CD4-positive, alpha-beta memory T cell (primary cell): ENCODE measurements at regions of chr12 and their contacts with region 1.

Region 1: DNA sequence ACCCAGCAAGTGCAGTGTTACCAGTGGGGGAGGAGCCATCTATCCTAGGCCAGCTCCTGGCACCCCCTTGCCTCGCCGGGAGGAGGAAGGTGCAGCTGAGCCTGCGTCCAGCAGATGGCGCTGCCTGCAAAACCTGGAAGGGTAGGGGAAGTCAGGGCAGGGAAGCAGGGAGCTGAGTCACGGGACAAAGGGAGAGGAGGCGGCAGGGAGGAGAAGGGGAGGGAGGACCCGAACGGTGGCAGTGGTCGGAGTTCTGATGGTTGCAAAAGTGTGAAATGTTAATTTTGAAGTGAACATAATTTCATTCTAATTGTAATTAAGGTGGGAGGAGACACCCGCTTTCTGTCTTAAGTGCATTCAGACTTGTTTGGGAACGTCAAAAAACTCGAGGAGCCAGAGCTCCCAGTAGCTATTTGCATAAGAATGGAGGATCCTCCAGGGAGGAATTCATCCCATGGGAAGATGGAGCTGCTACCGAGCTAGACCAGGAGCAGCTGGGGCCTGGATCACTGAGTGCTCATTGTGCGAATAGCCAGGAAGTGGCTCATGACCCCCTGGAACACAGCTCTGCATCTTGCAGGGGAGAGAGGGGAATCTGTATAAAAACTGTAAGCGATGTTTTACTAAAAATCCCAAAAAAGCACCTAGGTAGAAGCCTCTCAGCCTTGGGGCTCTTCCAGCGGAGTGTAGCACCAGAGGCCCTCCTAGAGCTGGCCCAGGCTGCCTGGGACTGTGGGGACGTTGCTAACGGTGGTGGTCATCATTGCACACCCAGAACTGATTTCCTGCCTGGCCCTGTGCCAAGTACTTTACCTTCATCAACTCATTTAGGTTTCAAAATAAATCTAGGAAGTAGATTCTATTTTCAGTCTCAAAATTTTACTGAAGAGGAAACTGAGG is 59.5 kb downstream of the EMP1 start:
- DNase-seq: peak; percentile 57 to 71 (median 61)
- H3K4me3 ChIP-seq: no peak overlapping the region
- H3K4me3 Mint-ChIP-seq: peak overlapping the region in 2 of 8 donors; percentile 34 to 49
- H3K27ac ChIP-seq: no peak overlapping the region
- H3K27ac Mint-ChIP-seq: no peak overlapping the region
- H3K4me1 ChIP-seq: no peaks in the 10 kb centered on the region
- H3K4me1 Mint-ChIP-seq: peaks cover 0 to 3% (median 1%) of the 10 kb centered on the region in 4 donors
- H3K27me3 ChIP-seq: no peaks in the 10 kb centered on the region
- H3K27me3 Mint-ChIP-seq: peaks cover 6 to 12% of the 10 kb centered on the region in 2 donors

Region 2: DNA sequence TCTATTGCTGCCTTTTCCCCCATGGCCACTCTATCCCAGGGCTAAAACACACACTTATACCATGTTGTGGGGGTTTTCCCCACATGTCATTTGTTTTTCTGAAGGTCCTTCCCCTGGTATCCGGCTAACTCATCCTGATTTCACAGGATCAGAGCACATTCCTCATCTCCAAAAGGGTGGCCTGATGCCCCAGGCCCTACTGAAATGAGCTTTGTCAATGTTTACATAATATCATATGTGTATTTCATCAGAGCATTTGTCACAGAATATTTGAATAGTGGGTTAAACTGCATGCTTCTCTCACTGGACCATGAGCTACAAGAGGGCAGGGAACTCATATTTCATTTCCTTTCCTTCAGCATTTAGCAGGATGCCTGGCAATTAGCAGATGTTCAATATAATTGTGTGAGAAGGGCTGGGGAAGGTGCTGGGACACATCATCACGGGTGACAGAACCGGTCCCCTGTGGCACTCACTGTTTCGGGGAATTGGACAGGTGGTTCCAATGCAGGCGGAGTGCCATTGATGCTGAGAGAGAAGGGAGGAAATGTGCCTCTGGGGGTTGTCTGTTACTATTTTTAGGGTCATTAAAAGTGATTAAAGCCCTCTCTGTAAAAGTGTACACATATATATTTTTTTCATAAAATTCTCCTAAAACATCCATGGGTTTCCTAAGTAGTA is 32.7 kb before region 1 on chr12:
- CTCF ChIA-PET with region 1: interaction called, 11 read pairs
- POLR2A ChIA-PET with region 1: no interaction called
- intact Hi-C with region 1: no loop called
- DNase-seq: no peak
- H3K4me3 ChIP-seq: no peak overlapping the region
- H3K4me3 Mint-ChIP-seq: no peak overlapping the region
- H3K27ac ChIP-seq: no peak overlapping the region
- H3K27ac Mint-ChIP-seq: no peak overlapping the region
- H3K4me1 ChIP-seq: no peaks in the 10 kb centered on the region
- H3K4me1 Mint-ChIP-seq: no peaks in the 10 kb centered on the region
- H3K27me3 ChIP-seq: peaks cover 5% of the 10 kb centered on the region
- H3K27me3 Mint-ChIP-seq: peaks cover 15 to 16% of the 10 kb centered on the region in 2 donors

Region 3: DNA sequence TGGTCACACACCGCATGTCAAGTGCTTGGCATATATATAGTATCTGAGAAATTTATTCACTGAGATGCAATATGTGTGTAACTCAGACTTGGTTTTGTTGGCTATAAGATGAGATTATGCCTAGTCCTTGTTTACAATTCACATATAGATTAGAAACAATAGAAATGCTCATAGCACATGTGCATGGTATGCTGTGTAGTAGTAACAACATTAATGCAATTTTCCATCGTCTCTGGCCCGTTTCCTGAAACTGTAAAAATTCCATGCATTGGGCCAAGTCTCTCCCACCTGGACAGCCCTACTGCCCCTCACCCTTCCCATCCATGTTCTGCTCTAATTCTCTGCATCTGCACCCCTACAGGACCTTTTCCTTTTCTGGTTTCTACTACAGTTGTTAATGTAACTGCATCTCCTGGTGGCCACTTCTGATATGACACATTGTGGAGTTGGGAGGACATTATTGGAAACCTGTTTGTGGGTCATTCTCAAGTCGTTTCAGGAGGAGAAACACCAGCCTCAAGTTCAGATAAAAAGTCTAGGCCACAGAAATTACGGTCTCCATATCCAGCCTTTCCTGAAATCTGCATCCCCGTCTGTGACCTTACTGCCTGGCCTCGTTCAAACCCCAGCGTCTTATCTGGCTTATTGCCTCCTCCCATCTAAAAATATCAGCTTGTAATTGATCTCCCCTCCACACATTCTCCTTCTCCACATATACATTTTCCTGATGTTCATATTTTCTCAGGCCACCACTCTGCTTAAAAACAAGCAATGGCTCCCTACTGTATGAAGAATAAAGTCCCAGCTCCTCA is 22.0 kb before region 1 on chr12:
- CTCF ChIA-PET with region 1: interaction called, 12 read pairs
- POLR2A ChIA-PET with region 1: no interaction called
- intact Hi-C with region 1: no loop called
- DNase-seq: peak; percentile 21 to 40 (median 27)
- H3K4me3 ChIP-seq: no peak overlapping the region
- H3K4me3 Mint-ChIP-seq: no peak overlapping the region
- H3K27ac ChIP-seq: no peak overlapping the region
- H3K27ac Mint-ChIP-seq: peak overlapping the region in 1 of 7 donors; percentile 63
- H3K4me1 ChIP-seq: no peaks in the 10 kb centered on the region
- H3K4me1 Mint-ChIP-seq: no peaks in the 10 kb centered on the region
- H3K27me3 ChIP-seq: no peaks in the 10 kb centered on the region
- H3K27me3 Mint-ChIP-seq: peaks cover 14 to 16% of the 10 kb centered on the region in 2 donors

Region 4: DNA sequence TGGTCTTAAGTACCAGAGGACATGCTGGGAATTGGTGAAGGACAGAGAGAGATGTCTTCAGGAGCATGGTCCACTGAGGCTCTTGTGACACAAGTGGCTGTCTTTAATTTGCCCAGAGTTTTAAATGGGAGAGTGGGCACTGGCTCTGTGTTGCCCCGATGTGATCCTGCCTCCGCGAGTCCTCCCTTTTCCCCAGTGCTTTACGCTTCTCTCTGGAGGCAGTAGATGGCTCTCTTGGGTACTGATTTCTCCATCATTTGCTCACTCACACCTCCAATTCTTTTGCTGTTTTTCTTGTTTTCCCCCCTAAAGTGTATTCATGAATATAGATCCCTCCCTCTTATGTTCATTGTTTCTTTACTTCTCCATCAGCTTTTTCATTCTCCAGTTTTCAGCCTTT is 14.8 kb after region 1 on chr12:
- CTCF ChIA-PET with region 1: interaction called, 43 read pairs
- POLR2A ChIA-PET with region 1: no interaction called
- intact Hi-C with region 1: no loop called
- DNase-seq: no peak
- H3K4me3 ChIP-seq: no peak overlapping the region
- H3K4me3 Mint-ChIP-seq: no peak overlapping the region
- H3K27ac ChIP-seq: no peak overlapping the region
- H3K27ac Mint-ChIP-seq: no peak overlapping the region
- H3K4me1 ChIP-seq: no peaks in the 10 kb centered on the region
- H3K4me1 Mint-ChIP-seq: no peaks in the 10 kb centered on the region
- H3K27me3 ChIP-seq: no peaks in the 10 kb centered on the region
- H3K27me3 Mint-ChIP-seq: peaks cover 24 to 25% of the 10 kb centered on the region in 2 donors

Region 5: GRCh38 chr12:13278249-13278787 is 22.3 kb after region 1 on chr12:
- CTCF ChIA-PET with region 1: interaction called, 35 read pairs
- POLR2A ChIA-PET with region 1: no interaction called
- intact Hi-C with region 1: no loop called
- DNase-seq: peak in 4 of 5 donors; percentile 40 to 50 (median 43)
- H3K4me3 ChIP-seq: no peak overlapping the region
- H3K4me3 Mint-ChIP-seq: peak overlapping the region in 2 of 8 donors; percentile 32 to 57
- H3K27ac ChIP-seq: no peak overlapping the region
- H3K27ac Mint-ChIP-seq: no peak overlapping the region
- H3K4me1 ChIP-seq: peaks cover 4% of the 10 kb centered on the region
- H3K4me1 Mint-ChIP-seq: peaks cover 0 to 7% (median 5%) of the 10 kb centered on the region in 4 donors
- H3K27me3 ChIP-seq: peaks cover 10% of the 10 kb centered on the region
- H3K27me3 Mint-ChIP-seq: peaks cover 30 to 35% of the 10 kb centered on the region in 2 donors

Region 6: GRCh38 chr12:13404631-13405473 is 148.8 kb after region 1 on chr12:
- CTCF ChIA-PET with region 1: no interaction called
- POLR2A ChIA-PET with region 1: no interaction called
- intact Hi-C with region 1: no loop called
- DNase-seq: no peak
- H3K4me3 ChIP-seq: no peak overlapping the region
- H3K4me3 Mint-ChIP-seq: no peak overlapping the region
- H3K27ac ChIP-seq: no peak overlapping the region
- H3K27ac Mint-ChIP-seq: no peak overlapping the region
- H3K4me1 ChIP-seq: no peaks in the 10 kb centered on the region
- H3K4me1 Mint-ChIP-seq: no peaks in the 10 kb centered on the region
- H3K27me3 ChIP-seq: no peaks in the 10 kb centered on the region
- H3K27me3 Mint-ChIP-seq: peaks cover 10 to 13% of the 10 kb centered on the region in 2 donors